Stomach (tissue), 19 donors: ENCODE measurements at regions of chr12 and their contacts with region 1.

Region 1: GRCh38 chr12:21989819-21990412 is 48.7 kb upstream of the ABCC9 start:
- DNase-seq: peak in 1 of 2 donors; percentile 60
- H3K4me3 ChIP-seq: no peak overlapping the region
- H3K27ac ChIP-seq: no peak overlapping the region
- H3K4me1 ChIP-seq: no peaks in the 10 kb centered on the region
- H3K27me3 ChIP-seq: no peaks in the 10 kb centered on the region
- CTCF ChIP-seq: peak in 5 of 7 experiments; percentile 36 to 48 (median 42)
- EP300 ChIP-seq: no peak
- POLR2A ChIP-seq: no peak

Region 2: DNA sequence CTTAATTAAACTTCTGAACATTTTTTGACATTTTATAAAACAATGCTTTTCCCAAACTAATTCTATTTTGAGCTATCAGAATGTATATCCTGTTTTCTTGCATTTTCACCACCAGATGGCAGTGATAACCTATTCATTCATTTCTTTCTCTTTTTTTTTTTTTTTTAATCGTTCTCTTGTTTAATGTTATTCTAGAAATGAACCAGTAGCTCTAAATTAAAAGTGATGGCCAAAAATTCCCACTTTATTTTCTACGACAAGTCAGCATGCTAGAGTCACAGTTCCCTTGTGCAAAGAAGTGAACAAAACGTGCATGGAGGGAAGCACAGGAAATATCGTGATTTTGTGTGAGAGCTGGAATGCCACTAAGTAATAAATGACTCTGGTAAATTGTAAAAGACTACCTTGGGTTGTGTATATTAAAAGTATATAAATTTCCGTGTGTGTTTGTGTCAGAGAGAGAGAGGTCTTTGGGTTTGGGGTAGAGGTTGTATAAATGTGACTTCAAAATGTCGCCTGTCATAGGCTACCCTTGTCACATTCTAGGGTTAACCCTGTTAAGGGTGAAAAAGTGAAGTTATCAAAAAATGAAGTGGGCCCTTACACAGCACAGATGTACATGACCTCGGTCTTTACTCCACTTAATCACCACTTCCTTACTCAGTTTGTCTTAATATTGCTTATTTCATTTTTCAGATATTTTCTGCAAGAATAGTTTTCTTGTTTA is 291.8 kb before region 1 on chr12:
- intact Hi-C with region 1: loop called (anchors 10 kb)
- DNase-seq: peak in 1 of 2 donors; percentile 77
- H3K4me3 ChIP-seq: peak overlapping the region in 1 of 4 donors; percentile 15
- H3K27ac ChIP-seq: peak overlapping the region in 1 of 5 donors; percentile 49
- H3K4me1 ChIP-seq: peaks cover 0 to 7% (median 3%) of the 10 kb centered on the region in 4 donors
- H3K27me3 ChIP-seq: no peaks in the 10 kb centered on the region
- CTCF ChIP-seq: peak in 5 of 7 experiments; percentile 46 to 85 (median 70)
- EP300 ChIP-seq: no peak
- POLR2A ChIP-seq: no peak